ENCODE measurements at regions of chr15 and their contacts with region 1.

Region 1: DNA sequence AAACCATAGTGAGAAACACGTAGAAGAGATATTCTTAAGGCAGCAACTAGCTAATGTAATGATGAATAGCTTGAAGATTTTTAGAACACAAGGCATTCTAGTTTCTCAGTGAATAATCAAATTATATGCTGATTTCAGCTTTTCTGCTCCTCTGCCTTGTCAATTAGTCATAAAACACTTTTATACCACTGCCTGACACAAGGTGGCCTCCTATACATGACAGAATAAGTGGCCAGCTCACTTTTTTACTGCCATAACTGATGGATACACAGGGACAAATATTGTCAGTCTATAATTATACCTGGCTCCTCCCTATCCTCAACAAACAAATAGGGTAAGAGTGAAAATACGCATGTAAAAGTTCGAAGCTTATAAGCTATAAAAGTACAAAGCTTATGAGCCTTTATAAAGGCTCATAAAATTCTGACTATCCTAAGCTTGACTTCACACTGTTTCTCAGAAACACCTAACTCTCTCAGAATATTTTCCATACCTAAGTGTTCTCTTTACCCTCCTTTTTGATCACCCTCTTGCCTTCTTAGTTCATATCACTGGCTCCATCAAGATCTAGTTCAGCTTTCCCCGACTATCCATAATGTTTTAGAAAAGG is 81.6 kb downstream of the HERC1 start:
- DNase-seq: peak; percentile 10
- H3K4me3 ChIP-seq: no peak overlapping the region
- H3K27ac ChIP-seq: no peak overlapping the region
- H3K27me3 ChIP-seq: no peaks in the 10 kb centered on the region
- CTCF ChIP-seq: peak; percentile 80

Region 2: GRCh38 chr15:63729115-63729884 is 22.9 kb before region 1 on chr15:
- CTCF ChIA-PET with region 1: interaction called, 12 read pairs
- POLR2A ChIA-PET with region 1: no interaction called
- DNase-seq: no peak
- H3K4me3 ChIP-seq: no peak overlapping the region
- H3K27ac ChIP-seq: no peak overlapping the region
- H3K27me3 ChIP-seq: no peaks in the 10 kb centered on the region
- CTCF ChIP-seq: no peak

Region 3: GRCh38 chr15:63891079-63891767 is 139.0 kb after region 1 on chr15:
- CTCF ChIA-PET with region 1: interaction called, 28 read pairs
- POLR2A ChIA-PET with region 1: no interaction called
- DNase-seq: peak; percentile 36
- H3K4me3 ChIP-seq: no peak overlapping the region
- H3K27ac ChIP-seq: no peak overlapping the region
- H3K27me3 ChIP-seq: peaks cover 7% of the 10 kb centered on the region
- CTCF ChIP-seq: peak; percentile 89

Region 4: DNA sequence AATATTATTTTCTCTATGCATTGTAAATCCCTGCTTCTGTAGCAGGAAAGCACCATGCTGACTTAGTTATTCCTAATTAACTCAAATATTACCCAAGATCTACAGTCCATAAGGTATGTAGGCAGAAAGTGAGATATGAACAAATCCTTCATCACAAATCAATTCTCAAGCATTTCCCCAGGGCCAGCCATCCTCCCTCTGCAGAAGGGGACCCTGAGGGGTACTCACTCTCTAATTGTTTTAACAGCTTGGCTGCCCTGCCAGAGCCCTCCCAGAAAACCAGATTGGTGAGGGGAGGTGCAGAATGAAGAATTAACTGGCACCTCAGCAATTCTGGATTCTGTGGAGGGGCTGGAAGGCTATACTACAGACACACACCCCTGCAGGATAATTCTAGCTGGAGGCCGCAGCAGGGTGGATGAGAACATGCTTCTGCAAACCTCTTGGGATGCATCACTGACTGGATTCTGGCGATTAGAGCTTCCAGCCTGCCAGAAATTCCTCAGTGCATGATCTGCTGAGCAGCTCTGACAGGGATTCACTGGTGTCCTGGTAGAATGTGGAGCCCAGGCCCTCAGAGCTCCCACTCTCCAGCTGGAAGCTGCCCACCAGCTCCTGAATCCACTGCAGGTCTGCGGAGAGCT is 170.2 kb after region 1 on chr15:
- CTCF ChIA-PET with region 1: no interaction called
- POLR2A ChIA-PET with region 1: no interaction called
- DNase-seq: no peak
- H3K4me3 ChIP-seq: no peak overlapping the region
- H3K27ac ChIP-seq: no peak overlapping the region
- H3K27me3 ChIP-seq: peaks cover 15% of the 10 kb centered on the region
- CTCF ChIP-seq: no peak

Region 5: DNA sequence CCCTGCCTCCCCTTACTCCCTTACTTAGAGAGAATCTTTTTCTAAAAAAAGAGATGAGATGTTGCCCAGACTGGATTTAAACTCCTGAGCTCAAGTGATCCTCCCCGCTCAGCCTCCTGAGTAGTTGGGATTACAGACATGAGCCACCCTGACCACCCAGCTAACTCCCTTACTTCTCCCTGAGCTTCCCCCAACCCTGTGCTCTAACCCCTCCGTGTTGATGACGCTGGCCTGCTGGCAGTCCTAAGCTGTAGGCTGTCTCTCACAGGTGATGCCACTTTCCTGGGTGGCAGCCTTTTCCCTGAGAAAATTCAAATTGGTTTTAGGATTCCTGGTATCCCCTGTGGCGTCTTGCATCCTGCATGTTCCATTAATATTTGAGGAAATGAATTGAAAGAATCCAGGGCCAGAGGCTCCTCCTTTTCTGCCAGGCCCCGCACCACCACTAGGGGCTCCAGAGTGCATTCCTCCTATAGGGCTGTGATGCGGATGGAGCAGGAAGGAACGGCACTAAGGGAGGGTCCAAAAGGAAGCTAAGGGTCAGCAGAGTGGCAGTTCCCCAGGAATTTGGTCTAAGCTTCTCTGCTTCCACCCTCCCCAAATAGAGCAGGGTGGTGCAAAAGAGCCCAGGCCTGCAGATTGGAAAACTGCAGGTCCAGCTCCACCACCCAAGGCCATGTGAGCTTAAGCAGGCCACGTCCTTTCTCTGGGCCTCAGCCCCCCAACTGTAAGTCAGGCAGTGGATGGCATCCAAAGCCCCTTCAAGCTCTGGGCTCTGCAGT is 193.0 kb after region 1 on chr15:
- CTCF ChIA-PET with region 1: interaction called, 14 read pairs
- POLR2A ChIA-PET with region 1: no interaction called
- DNase-seq: no peak
- H3K4me3 ChIP-seq: no peak overlapping the region
- H3K27ac ChIP-seq: no peak overlapping the region
- H3K27me3 ChIP-seq: peaks cover 2% of the 10 kb centered on the region
- CTCF ChIP-seq: peak; percentile 94

Region 6: DNA sequence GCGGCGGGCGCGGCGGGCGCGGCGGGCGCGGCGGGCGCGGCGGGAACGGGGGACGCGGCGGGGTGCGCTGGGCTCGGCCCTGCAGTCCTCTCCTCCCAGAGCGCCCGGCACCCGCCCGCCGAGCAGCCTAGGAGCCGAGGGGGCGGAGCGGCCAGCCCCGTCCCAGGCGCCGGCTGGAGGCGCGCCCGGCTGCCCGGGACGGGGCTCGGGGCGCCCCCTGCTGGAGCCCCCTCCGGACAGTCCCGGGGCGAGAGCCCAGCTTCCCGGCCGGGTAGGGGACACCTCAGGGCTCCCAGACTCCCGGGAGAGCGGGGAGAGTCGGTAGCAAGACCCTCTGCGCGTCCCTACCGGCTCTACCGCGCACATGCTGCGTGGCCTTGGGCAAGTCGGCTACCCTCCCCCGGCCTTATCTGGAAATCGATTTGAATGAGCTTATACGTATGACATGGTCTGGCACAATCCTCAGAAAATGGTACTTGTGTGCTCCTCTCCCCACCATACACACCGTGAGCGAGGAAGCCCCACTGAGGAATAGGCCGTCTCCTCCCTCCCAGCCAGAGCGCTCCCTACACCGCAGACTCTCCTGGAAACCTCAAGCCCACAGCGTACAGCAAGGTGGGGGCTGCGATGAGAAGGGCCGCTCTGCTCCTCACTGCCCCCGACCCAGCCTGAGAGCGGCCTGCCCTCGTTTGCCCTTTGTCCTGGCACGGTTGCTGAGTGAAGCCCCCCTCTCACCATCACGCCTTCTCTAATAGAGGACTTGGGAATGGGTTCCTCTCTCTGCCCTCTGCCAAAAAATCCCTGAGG is 294.4 kb after region 1 on chr15 and contains the start of gene DAPK2:
- CTCF ChIA-PET with region 1: interaction called, 31 read pairs
- POLR2A ChIA-PET with region 1: no interaction called
- DNase-seq: no peak
- H3K4me3 ChIP-seq: peak within 1 kb of the TSS; percentile 56
- H3K27ac ChIP-seq: no peak within 1 kb of the TSS
- H3K27me3 ChIP-seq: peaks cover 57% of the 10 kb centered on the region
- CTCF ChIP-seq: peak; percentile 63
- polyA plus RNA-seq, gene DAPK2: 0.42 and 0.57 TPM in 2 replicates

Region 7: DNA sequence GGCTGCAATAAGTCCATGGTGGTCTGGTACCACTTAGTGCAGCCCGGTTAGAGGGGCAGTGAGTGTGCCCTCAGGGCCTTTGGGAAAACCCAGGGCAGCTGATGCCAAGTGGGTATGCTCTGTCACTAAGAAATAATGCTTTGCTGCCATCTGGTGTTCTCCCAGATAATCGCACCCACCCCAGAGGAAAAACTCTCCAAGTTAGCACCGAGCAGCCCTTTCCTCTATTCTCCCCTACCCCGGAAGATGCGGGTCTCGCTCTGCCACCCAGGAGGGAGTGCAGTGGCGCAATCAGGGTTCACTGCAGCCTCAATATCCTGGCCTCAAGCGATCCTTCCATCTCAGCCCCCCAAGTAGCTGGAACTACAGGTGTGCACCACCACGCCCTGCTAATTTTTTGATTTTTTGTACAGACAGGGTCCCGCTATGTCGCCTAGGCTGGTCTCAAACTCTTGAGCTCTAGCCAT is 315.4 kb after region 1 on chr15:
- CTCF ChIA-PET with region 1: interaction called, 189 read pairs
- POLR2A ChIA-PET with region 1: interaction called, 3 read pairs
- DNase-seq: peak; percentile 8
- H3K4me3 ChIP-seq: no peak overlapping the region
- H3K27ac ChIP-seq: no peak overlapping the region
- H3K27me3 ChIP-seq: no peaks in the 10 kb centered on the region
- CTCF ChIP-seq: peak; percentile 81